Activated T-helper 1 cell treated with anti-CD3 and anti-CD28 coated beads, Interleukin-12 subunit alpha, Interleukin-12 subunit beta, Interleukin-2, Interleukin-4 antibody, amounts not matched to agents 30 ng/mL and 10 ng/mL and 1 ng/mL, durations not matched to agents 14 hours and 24 hours and 36 hours (primary cell): ENCODE measurements at regions of chr1 and their contacts with region 1.

Region 1: GRCh38 chr1:232635778-232636356 is 5.9 kb upstream of the SIPA1L2 start:
- DNase-seq: no peak
- H3K4me3 Mint-ChIP-seq: no peak overlapping the region
- H3K27ac Mint-ChIP-seq: no peak overlapping the region
- H3K4me1 Mint-ChIP-seq: peaks cover 4% of the 10 kb centered on the region
- H3K27me3 Mint-ChIP-seq: peaks cover 29% of the 10 kb centered on the region

Region 2: GRCh38 chr1:232737917-232738316 is 102.0 kb after region 1 on chr1:
- intact Hi-C with region 1: no loop called
- DNase-seq: no peak
- H3K4me3 Mint-ChIP-seq: no peak overlapping the region
- H3K27ac Mint-ChIP-seq: no peak overlapping the region
- H3K4me1 Mint-ChIP-seq: no peaks in the 10 kb centered on the region
- H3K27me3 Mint-ChIP-seq: peaks cover 4% of the 10 kb centered on the region

Region 3: DNA sequence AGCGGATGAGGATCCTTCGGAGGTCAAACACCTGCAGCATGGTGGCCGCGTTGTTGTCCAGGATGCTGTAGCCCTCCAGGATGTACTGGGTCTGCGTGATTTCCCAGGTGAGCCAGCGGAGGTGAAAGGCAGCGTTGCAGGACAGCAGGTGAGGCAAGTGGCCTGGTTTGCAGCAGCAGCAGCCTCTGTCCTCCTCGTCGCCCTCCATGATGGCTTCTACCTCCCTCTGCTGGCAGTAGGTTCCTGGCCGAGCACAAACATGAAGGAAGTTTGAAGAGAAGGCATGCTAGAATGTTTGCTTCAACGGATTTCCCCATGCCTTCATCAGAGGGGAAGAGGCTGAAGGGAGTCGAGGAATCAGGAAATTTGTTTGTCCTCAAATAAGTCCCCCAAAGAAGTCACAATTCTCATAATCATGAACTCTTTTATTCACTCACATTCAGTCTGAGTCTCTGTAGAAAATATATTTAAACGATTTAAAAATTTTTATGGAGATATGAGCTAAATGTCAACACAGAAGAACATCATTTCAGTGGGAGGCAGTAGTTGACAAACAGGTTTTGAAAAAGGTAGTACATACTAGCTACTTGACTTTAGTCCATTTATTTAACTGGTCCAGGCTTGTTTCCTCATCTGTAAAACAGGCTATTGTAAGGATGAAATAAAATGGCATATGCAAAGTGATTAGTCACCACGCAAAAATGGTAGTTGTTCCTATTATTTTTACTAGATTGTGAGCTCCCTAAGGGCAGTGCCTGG is 389.5 kb after region 1 on chr1:
- intact Hi-C with region 1: loop called (anchors 2 kb)
- DNase-seq: no peak
- H3K4me3 Mint-ChIP-seq: no peak overlapping the region
- H3K27ac Mint-ChIP-seq: no peak overlapping the region
- H3K4me1 Mint-ChIP-seq: no peaks in the 10 kb centered on the region
- H3K27me3 Mint-ChIP-seq: no peaks in the 10 kb centered on the region

Region 4: GRCh38 chr1:233240829-233241682 is 605.2 kb after region 1 on chr1:
- intact Hi-C with region 1: loop called (anchors 2 kb)
- DNase-seq: no peak
- H3K4me3 Mint-ChIP-seq: no peak overlapping the region
- H3K27ac Mint-ChIP-seq: no peak overlapping the region
- H3K4me1 Mint-ChIP-seq: no peaks in the 10 kb centered on the region
- H3K27me3 Mint-ChIP-seq: no peaks in the 10 kb centered on the region